Ovary (tissue), 10 donors: ENCODE measurements at regions of chr9 and their contacts with region 1.

Region 1: GRCh38 chr9:132669698-132670456 is at the start of gene DDX31:
- DNase-seq: peak; percentile 86 to 93 (median 88)
- H3K4me3 ChIP-seq: peak within 1 kb of the TSS; percentile 92
- H3K27ac ChIP-seq: peak within 1 kb of the TSS; percentile 82 to 98
- H3K4me1 ChIP-seq: peaks cover 5% of the 10 kb centered on the region
- H3K27me3 ChIP-seq: no peaks in the 10 kb centered on the region
- CTCF ChIP-seq: no peak
- EP300 ChIP-seq: no peak
- POLR2A ChIP-seq: peak; percentile 26
- total RNA-seq, gene DDX31: 9.7 to 19.6 (median 16.4) TPM

Region 2: GRCh38 chr9:132717326-132717945 is 47.6 kb after region 1 on chr9:
- intact Hi-C with region 1: no loop called
- DNase-seq: no peak
- H3K4me3 ChIP-seq: no peak overlapping the region
- H3K27ac ChIP-seq: no peak overlapping the region
- H3K4me1 ChIP-seq: no peaks in the 10 kb centered on the region
- H3K27me3 ChIP-seq: no peaks in the 10 kb centered on the region
- CTCF ChIP-seq: no peak
- EP300 ChIP-seq: no peak
- POLR2A ChIP-seq: no peak

Region 3: GRCh38 chr9:132769906-132770810 is 100.3 kb after region 1 on chr9:
- intact Hi-C with region 1: loop called in 2 of 4 experiments (anchors 5 to 10 kb)
- DNase-seq: peak; percentile 69 to 85 (median 75)
- H3K4me3 ChIP-seq: peak overlapping the region; percentile 78
- H3K27ac ChIP-seq: peak overlapping the region; percentile 70 to 80
- H3K4me1 ChIP-seq: peaks cover 4% of the 10 kb centered on the region
- H3K27me3 ChIP-seq: no peaks in the 10 kb centered on the region
- CTCF ChIP-seq: no peak
- EP300 ChIP-seq: no peak
- POLR2A ChIP-seq: no peak

Region 4: DNA sequence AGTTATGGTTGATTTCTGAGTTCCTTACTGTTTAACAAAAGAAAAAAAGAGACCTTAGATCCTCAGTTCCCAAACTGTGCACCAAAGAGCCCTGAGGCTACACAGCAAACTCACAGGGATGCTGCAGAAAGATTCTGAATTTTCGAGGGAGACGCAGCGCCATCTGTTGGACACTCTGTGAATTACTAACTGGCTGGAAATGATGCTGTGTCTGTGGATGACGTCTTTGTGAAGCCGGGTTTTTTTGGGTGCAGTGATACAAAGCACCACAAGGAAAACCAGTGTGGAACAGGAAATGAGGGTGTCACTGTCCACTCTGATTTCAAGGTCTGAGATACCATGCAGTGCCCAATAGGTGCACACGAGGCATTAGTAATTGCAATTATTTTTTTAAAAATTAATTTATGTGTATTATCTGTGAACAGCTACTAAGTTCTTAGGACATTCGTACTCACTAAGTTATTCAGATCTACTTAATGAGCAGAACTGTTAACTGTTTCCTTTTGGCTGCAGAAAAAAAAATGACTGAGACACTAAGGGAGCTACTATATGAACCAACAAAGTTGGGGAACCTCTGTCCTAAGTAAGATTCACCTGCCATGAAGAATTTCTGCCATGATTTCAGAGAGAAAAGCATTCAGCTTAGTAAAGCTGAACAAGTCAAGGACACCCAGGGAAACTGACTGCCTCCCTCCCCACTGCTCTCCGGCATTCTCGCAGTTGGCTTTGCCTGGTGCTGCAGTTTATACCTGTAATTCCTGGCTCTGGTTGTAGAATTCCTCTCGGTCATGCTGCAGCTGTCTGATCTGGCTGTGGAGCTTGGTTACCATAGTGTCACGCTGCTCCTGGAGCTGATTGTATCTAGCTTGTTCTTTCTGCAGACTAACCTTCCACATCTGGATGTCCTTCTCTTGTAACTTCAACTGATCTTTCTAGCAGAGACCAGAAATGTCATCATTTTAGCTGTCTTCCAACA is 232.3 kb after region 1 on chr9:
- intact Hi-C with region 1: loop called in 1 of 4 experiments (anchors 10 kb)
- DNase-seq: peak; percentile 58 to 83 (median 75)
- H3K4me3 ChIP-seq: no peak overlapping the region
- H3K27ac ChIP-seq: peak overlapping the region in 1 of 2 donors; percentile 2
- H3K4me1 ChIP-seq: no peaks in the 10 kb centered on the region
- H3K27me3 ChIP-seq: no peaks in the 10 kb centered on the region
- CTCF ChIP-seq: peak; percentile 71 to 82 (median 74)
- EP300 ChIP-seq: no peak
- POLR2A ChIP-seq: no peak